H1 (cell line): ENCODE measurements at regions of chr9 and their contacts with region 1.

Region 1: GRCh38 chr9:68416936-68417564 is 60.6 kb downstream of the PGM5 start:
- DNase-seq: no peak
- H3K4me3 ChIP-seq: no peak overlapping the region
- H3K27ac ChIP-seq: no peak overlapping the region
- H3K4me1 ChIP-seq: no peaks in the 10 kb centered on the region
- H3K27me3 ChIP-seq: peaks cover 0 to 2% (median 0%) of the 10 kb centered on the region in 4 experiments; a peak in 1 of 7 replicates
- CTCF ChIP-seq: peak; percentile 21 to 67 (median 48)
- EP300 ChIP-seq: no peak
- POLR2A ChIP-seq: no peak
- RAD21 ChIP-seq: peak; percentile 46 to 58

Region 2: DNA sequence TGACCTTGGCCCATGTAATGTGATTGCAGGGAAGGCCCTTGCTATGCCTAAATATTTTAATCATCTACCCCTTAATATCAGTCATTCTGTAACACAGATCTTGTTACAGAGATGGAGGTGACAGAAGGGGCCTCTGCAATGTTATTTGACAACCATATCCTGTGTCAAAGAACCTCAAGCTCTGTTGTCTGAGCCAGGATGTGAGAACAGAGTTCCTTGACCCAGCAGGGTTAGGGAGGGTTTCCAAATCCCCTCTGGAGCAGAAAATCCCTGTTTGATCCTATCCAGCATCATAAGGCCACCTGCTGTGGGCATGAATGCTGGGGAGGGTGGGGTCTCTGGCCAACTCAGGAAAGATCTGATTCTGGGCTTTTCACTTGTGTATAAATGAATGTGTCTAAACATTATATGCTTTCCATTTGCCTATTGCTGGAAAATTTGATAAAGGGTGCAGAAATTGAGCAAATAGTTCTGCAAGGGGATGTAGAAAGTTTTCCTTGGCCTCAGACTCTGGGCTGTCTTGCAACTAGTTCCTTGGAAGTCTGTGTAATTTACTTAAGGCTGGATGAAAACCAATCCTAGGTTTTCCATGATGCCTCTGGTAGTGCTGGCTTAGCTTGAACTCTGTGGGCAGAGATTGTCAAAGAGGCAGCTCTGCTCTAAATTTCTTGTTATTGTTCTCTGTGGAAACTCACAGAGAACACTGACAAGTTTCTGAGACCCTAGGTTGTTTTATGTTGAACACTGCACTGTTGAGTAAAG is 10.3 kb after region 1 on chr9:
- CTCF ChIA-PET with region 1: interaction called, 17 read pairs
- POLR2A ChIA-PET with region 1: no interaction called
- DNase-seq: no peak
- H3K4me3 ChIP-seq: no peak overlapping the region
- H3K27ac ChIP-seq: no peak overlapping the region
- H3K4me1 ChIP-seq: no peaks in the 10 kb centered on the region
- H3K27me3 ChIP-seq: no peaks in the 10 kb centered on the region; a peak in 1 of 7 replicates
- CTCF ChIP-seq: no peak
- EP300 ChIP-seq: no peak
- POLR2A ChIP-seq: no peak
- RAD21 ChIP-seq: no peak

Region 3: GRCh38 chr9:68437785-68438184 is 20.7 kb after region 1 on chr9:
- CTCF ChIA-PET with region 1: interaction called, 14 read pairs
- POLR2A ChIA-PET with region 1: no interaction called
- DNase-seq: no peak
- H3K4me3 ChIP-seq: no peak overlapping the region
- H3K27ac ChIP-seq: no peak overlapping the region
- H3K4me1 ChIP-seq: no peaks in the 10 kb centered on the region
- H3K27me3 ChIP-seq: 0 out of 7 replicates have a peak, but pooled peaks cover 0 to 2% (median 0%) of the 10 kb centered on the region in 4 experiments
- CTCF ChIP-seq: no peak
- EP300 ChIP-seq: no peak
- POLR2A ChIP-seq: no peak
- RAD21 ChIP-seq: no peak

Region 4: GRCh38 chr9:68446836-68447235 is 29.8 kb after region 1 on chr9:
- CTCF ChIA-PET with region 1: interaction called, 11 read pairs
- POLR2A ChIA-PET with region 1: no interaction called
- DNase-seq: no peak
- H3K4me3 ChIP-seq: no peak overlapping the region
- H3K27ac ChIP-seq: no peak overlapping the region
- H3K4me1 ChIP-seq: no peaks in the 10 kb centered on the region
- H3K27me3 ChIP-seq: peaks cover 0 to 3% (median under 1%) of the 10 kb centered on the region in 4 experiments; a peak in 3 of 7 replicates
- CTCF ChIP-seq: no peak
- EP300 ChIP-seq: no peak
- POLR2A ChIP-seq: no peak
- RAD21 ChIP-seq: no peak

Region 5: DNA sequence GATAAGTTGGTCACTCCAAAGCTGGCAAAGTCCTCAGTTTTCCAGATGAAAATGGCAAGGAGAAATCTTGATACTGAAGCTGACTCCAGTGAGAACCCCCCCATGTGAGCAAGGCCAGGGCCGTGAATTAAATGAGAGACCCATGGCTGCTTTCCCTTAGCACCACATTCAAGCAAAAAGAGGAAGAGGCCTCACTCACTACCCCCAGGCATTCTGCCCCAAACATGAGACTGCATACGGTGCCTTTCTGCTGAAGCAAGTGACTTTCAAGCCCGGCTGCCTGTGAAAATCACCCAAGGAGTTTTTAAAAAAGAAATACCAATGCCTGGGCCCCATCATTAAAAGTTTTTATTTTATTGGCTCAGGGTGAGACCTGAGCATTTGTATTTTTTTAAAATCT is 56.7 kb after region 1 on chr9:
- CTCF ChIA-PET with region 1: interaction called, 10 read pairs
- POLR2A ChIA-PET with region 1: no interaction called
- DNase-seq: no peak
- H3K4me3 ChIP-seq: no peak overlapping the region
- H3K27ac ChIP-seq: no peak overlapping the region
- H3K4me1 ChIP-seq: no peaks in the 10 kb centered on the region
- H3K27me3 ChIP-seq: no peaks in the 10 kb centered on the region; a peak in 1 of 7 replicates
- CTCF ChIP-seq: no peak
- EP300 ChIP-seq: no peak
- POLR2A ChIP-seq: no peak
- RAD21 ChIP-seq: no peak

Region 6: GRCh38 chr9:68560071-68560844 is 143.2 kb after region 1 on chr9:
- CTCF ChIA-PET with region 1: interaction called, 15 read pairs
- POLR2A ChIA-PET with region 1: no interaction called
- DNase-seq: peak; percentile 54 to 91
- H3K4me3 ChIP-seq: no peak overlapping the region
- H3K27ac ChIP-seq: no peak overlapping the region
- H3K4me1 ChIP-seq: peaks cover 2 to 19% (median 8%) of the 10 kb centered on the region in 4 experiments; a peak in 6 of 7 replicates
- H3K27me3 ChIP-seq: peaks cover 0 to 9% (median 0%) of the 10 kb centered on the region in 4 experiments; a peak in 2 of 7 replicates
- CTCF ChIP-seq: peak; percentile 79 to 89 (median 89)
- EP300 ChIP-seq: no peak
- POLR2A ChIP-seq: no peak
- RAD21 ChIP-seq: peak; percentile 50 to 67; a peak in 3 of 4 replicates